ENCODE measurements at regions of chr1 and their contacts with region 1.

Region 1: GRCh38 chr1:39505289-39505688 is 13.9 kb downstream of the BMP8A start:
- DNase-seq: no peak
- H3K4me3 ChIP-seq: no peak overlapping the region
- H3K4me3 Mint-ChIP-seq: no peak overlapping the region
- H3K27ac Mint-ChIP-seq: no peak overlapping the region
- H3K4me1 ChIP-seq: peaks cover 28% of the 10 kb centered on the region
- H3K4me1 Mint-ChIP-seq: no peaks in the 10 kb centered on the region
- H3K27me3 ChIP-seq: no peaks in the 10 kb centered on the region
- H3K27me3 Mint-ChIP-seq: no peaks in the 10 kb centered on the region
- CTCF ChIP-seq: no peak

Region 2: DNA sequence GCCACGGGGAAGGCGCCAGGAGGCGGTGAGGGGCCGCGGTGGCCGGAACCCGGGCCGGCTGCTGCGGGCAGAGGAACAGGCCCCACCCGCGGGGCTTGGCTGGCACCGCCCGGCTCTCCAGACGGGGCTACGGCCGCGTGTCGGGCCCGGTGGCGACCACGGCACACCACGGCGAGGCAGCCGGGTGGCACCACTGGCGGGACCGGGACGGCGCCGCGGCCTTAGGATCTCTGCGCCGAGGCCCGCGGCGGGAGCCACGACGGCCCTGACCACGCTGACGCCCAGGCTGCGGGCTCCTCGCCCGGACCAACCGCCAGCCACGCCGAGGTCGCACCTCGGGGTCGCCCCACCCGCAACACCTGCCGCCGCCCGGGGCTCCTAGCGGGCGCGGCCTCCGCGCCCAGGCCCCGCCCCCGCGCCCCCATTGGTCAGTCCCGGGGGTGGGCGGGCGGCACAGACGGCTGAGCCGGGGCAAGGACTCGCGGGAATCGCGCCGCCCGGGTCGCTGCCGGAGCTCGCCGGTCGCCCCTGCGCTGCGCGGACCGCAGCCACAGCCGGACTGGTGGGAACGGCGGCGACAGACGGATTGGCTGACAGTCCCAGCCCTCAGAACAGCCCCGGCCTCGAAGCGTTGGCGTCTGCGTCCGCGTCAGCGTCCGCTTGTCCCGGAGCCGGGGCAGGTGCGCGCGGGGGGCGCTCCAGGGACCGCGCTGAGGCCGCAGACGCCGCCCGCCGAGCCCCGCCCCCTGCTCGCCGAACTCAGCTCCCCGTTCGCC is 14.0 kb before region 1 on chr1 and contains the start of gene BMP8A:
- CTCF ChIA-PET with region 1: interaction called, 3 read pairs
- POLR2A ChIA-PET with region 1: no interaction called
- intact Hi-C with region 1: loop called (anchors 2 kb)
- DNase-seq: peak; percentile 74 to 84
- H3K4me3 ChIP-seq: peak within 1 kb of the TSS; percentile 67
- H3K4me3 Mint-ChIP-seq: peak within 1 kb of the TSS; percentile 63
- H3K27ac Mint-ChIP-seq: no peak within 1 kb of the TSS
- H3K4me1 ChIP-seq: no peaks in the 10 kb centered on the region
- H3K4me1 Mint-ChIP-seq: no peaks in the 10 kb centered on the region
- H3K27me3 ChIP-seq: no peaks in the 10 kb centered on the region
- H3K27me3 Mint-ChIP-seq: no peaks in the 10 kb centered on the region
- CTCF ChIP-seq: no peak
- total RNA-seq, gene BMP8A: 3.2 and 3.6 TPM in 2 replicates